ENCODE measurements at regions of chr10 and their contacts with region 1.

Region 1: DNA sequence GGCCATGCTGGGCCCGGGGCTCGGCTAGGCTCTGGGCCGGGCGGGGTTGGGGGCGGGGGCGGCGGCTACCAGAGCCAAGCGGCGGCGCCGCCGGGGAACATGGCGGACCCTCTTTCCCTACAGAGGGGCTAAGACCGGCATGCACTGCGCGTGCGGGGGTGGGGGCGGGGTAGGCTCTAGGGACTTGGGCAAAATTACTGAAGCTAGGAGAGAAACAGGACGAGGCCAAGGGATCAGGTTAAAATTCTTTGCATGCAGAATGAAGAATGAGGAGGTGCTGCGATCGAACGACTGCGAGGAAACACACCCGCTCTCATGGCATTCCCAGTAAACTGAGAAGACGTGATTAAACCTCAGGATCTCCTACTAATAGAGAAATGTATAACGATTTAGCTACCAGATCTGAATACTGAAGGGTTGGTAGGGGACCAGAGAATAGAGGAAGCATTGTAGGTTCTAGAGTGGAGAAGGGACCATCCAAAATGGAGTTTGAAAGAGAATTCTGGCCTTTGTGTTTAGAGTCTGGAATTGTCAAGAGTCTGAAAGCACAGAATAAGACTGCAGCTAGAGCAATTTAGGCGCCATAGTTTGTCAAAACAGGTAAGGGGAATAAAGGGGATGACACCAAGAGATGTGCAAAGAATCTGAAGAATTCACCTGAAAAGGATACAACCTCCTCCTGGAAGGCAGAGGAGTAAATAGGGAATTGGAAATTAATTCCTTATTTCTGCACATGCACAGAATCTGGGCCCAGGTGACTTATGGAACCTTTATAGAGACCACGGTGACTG is at the start of gene PPP3CB:
- DNase-seq: peak; percentile 95
- H3K4me3 Mint-ChIP-seq: peak within 1 kb of the TSS; percentile 93
- H3K27ac Mint-ChIP-seq: peak within 1 kb of the TSS; percentile 95
- H3K4me1 Mint-ChIP-seq: peaks cover 40% of the 10 kb centered on the region
- H3K27me3 Mint-ChIP-seq: no peaks in the 10 kb centered on the region
- total RNA-seq, gene PPP3CB: 34.9 to 35.8 TPM

Region 2: DNA sequence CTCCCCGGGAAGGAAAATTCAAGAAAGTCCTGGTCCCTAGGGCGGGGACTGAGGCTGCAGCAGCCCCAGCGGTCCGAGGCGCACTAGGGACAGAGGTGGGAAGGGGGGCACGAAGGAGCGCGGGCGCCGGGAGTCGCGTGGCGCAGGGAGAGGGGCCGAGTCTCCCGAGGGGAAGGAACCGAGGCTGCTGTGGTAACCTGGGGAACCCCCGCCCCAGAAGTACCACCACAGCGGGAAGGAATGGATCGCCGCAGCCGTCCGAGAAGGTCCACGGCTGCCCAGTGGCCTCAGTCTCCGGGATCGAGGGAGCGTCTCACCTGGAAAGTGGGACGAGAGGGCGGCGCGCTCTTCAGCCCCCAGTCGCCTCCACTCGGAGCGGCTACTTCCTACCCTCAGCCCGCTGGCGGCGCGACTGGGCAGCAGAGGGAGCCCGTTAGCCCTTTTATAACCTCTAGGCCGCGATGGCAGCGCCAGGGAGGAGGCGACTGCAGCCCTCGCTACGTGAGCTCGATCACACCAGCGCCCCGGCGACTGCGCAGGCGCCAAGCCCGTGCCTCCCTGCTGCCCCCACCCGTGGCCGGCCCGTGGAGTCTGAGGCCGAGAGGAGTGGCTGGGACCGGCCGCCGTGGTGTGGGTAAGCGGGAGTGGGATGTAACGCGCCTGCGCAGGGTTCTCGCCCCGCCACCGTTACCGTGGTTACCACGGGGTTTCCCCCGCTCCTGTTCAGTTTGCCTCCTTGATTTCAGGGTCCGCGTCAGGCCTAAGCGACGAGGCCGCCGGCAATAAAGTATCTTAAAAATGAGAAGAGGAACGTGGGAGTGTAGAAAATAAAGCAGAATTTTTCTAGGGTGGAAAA is 399.4 kb before region 1 on chr10 and contains the start of gene P4HA1:
- CTCF ChIA-PET with region 1: no interaction called
- intact Hi-C with region 1: loop called (anchors 1 kb)
- DNase-seq: peak; percentile 96
- H3K4me3 Mint-ChIP-seq: peak within 1 kb of the TSS; percentile 83
- H3K27ac Mint-ChIP-seq: peak within 1 kb of the TSS; percentile 93
- H3K4me1 Mint-ChIP-seq: peaks cover 32% of the 10 kb centered on the region
- H3K27me3 Mint-ChIP-seq: no peaks in the 10 kb centered on the region
- total RNA-seq, gene P4HA1: 15.3 to 15.9 TPM

Region 3: DNA sequence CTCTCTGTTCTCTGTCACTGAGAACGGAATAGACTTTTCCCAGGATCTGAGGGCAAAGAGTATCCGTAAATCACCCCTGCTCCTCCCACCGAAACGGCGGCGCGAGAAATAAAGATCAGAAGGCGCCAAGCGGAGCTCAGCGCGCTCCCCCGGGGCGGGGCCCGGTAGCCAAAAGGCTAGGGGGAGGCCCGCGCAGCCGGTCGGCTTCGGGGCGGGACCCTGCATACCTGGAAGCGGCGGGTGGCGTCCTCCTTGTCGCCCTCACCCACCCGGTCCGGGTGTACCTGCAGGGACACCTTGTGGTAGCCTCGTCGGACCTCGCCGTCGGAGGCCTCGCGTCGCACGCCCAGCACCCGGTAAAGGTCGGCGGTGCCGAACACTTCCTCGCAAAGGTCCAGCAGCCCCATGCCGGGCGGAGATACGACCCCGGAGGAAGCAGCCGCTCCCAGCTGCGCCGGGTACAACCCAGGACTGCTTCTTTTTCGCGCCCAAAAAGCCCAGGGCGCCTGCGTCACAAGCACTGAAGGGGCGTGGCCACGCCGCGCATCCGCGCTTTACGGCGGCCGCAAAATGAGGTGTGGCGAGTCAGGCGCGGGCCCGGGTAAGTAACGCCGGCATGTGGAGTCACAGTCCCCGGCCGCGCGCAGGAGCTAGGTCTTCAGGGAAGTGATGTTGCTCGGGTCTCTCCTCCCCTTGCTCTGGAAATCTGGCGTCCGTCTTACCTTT is 249.1 kb before region 1 on chr10 and contains the start of gene DNAJC9:
- CTCF ChIA-PET with region 1: no interaction called
- intact Hi-C with region 1: loop called (anchors 1 kb)
- DNase-seq: peak; percentile 98
- H3K4me3 Mint-ChIP-seq: peak within 1 kb of the TSS; percentile 100
- H3K27ac Mint-ChIP-seq: peak within 1 kb of the TSS; percentile 97
- H3K4me1 Mint-ChIP-seq: peaks cover 67% of the 10 kb centered on the region
- H3K27me3 Mint-ChIP-seq: no peaks in the 10 kb centered on the region
- total RNA-seq, gene DNAJC9: 55.2 to 57.2 TPM

Region 4: GRCh38 chr10:73358331-73359279 is 137.5 kb before region 1 on chr10 and contains the start of gene CFAP70:
- CTCF ChIA-PET with region 1: no interaction called
- intact Hi-C with region 1: loop called (anchors 1 kb)
- DNase-seq: peak; percentile 96
- H3K4me3 Mint-ChIP-seq: peak within 1 kb of the TSS; percentile 96
- H3K27ac Mint-ChIP-seq: peak within 1 kb of the TSS; percentile 74
- H3K4me1 Mint-ChIP-seq: peaks cover 10% of the 10 kb centered on the region
- H3K27me3 Mint-ChIP-seq: no peaks in the 10 kb centered on the region
- total RNA-seq, gene CFAP70: 0.20 to 0.31 TPM

Region 5: GRCh38 chr10:73480158-73480557 is 15.9 kb before region 1 on chr10:
- CTCF ChIA-PET with region 1: interaction called, 4 read pairs
- intact Hi-C with region 1: loop called (anchors 1 kb)
- DNase-seq: no peak
- H3K4me3 Mint-ChIP-seq: no peak overlapping the region
- H3K27ac Mint-ChIP-seq: no peak overlapping the region
- H3K4me1 Mint-ChIP-seq: peaks cover 31% of the 10 kb centered on the region
- H3K27me3 Mint-ChIP-seq: no peaks in the 10 kb centered on the region

Region 6: GRCh38 chr10:73614720-73615119 is 118.6 kb after region 1 on chr10:
- CTCF ChIA-PET with region 1: no interaction called
- intact Hi-C with region 1: no loop called
- DNase-seq: no peak
- H3K4me3 Mint-ChIP-seq: no peak overlapping the region
- H3K27ac Mint-ChIP-seq: no peak overlapping the region
- H3K4me1 Mint-ChIP-seq: no peaks in the 10 kb centered on the region
- H3K27me3 Mint-ChIP-seq: no peaks in the 10 kb centered on the region

Region 7: DNA sequence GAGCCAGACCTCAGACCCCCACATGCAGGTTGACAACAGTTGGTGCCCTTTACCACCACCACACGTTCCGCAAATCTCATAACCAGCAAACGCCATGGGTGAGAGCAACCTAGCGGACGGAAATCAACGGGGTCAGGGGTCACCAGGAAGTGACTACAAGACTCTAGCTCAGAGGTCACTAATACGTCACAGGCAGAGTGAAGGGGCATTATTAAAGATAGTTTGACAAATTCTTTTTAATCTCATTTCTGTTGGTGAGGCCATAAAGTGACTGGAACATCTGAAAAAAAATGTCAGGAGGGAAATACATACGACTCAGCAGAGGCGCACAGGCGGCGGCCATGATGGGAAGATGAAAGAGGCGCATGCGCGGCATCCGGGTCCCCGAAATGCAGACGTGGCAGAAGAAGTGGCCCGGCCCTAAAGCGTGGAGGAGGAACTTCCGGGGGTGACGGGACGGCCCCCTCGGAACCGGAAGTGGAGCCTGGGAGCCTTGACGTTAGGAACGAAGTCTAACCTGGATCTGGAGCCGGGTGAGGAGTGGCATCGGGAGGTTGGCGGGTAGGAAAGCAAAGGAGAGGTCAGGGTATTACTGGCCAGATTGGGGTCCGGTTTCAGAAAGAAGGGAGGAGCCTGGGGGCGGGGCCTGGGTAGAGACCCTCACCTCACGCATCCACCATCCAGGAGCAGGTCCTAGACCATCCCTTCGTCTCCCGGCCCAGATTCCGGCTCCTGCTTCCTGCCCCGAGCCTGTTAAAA is 248.0 kb after region 1 on chr10 and contains the start of gene SEC24C:
- CTCF ChIA-PET with region 1: no interaction called
- intact Hi-C with region 1: loop called (anchors 5 kb)
- DNase-seq: peak; percentile 98
- H3K4me3 Mint-ChIP-seq: peak within 1 kb of the TSS; percentile 98
- H3K27ac Mint-ChIP-seq: peak within 1 kb of the TSS; percentile 100
- H3K4me1 Mint-ChIP-seq: peaks cover 44% of the 10 kb centered on the region
- H3K27me3 Mint-ChIP-seq: no peaks in the 10 kb centered on the region
- total RNA-seq, gene SEC24C: 67.0 to 68.1 TPM

Region 8: GRCh38 chr10:73810735-73811465 is 314.8 kb after region 1 on chr10:
- CTCF ChIA-PET with region 1: no interaction called
- intact Hi-C with region 1: loop called (anchors 2 kb)
- DNase-seq: peak; percentile 63
- H3K4me3 Mint-ChIP-seq: peak overlapping the region; percentile 93
- H3K27ac Mint-ChIP-seq: peak overlapping the region; percentile 99
- H3K4me1 Mint-ChIP-seq: peaks cover 47% of the 10 kb centered on the region
- H3K27me3 Mint-ChIP-seq: no peaks in the 10 kb centered on the region

Region 9: GRCh38 chr10:73931767-73932619 is 435.9 kb after region 1 on chr10:
- CTCF ChIA-PET with region 1: no interaction called
- intact Hi-C with region 1: no loop called
- DNase-seq: peak; percentile 92
- H3K4me3 Mint-ChIP-seq: no peak overlapping the region
- H3K27ac Mint-ChIP-seq: peak overlapping the region; percentile 83
- H3K4me1 Mint-ChIP-seq: peaks cover 15% of the 10 kb centered on the region
- H3K27me3 Mint-ChIP-seq: peaks cover 7% of the 10 kb centered on the region